ENCODE measurements at regions of chr2 and their contacts with region 1.

Region 1: DNA sequence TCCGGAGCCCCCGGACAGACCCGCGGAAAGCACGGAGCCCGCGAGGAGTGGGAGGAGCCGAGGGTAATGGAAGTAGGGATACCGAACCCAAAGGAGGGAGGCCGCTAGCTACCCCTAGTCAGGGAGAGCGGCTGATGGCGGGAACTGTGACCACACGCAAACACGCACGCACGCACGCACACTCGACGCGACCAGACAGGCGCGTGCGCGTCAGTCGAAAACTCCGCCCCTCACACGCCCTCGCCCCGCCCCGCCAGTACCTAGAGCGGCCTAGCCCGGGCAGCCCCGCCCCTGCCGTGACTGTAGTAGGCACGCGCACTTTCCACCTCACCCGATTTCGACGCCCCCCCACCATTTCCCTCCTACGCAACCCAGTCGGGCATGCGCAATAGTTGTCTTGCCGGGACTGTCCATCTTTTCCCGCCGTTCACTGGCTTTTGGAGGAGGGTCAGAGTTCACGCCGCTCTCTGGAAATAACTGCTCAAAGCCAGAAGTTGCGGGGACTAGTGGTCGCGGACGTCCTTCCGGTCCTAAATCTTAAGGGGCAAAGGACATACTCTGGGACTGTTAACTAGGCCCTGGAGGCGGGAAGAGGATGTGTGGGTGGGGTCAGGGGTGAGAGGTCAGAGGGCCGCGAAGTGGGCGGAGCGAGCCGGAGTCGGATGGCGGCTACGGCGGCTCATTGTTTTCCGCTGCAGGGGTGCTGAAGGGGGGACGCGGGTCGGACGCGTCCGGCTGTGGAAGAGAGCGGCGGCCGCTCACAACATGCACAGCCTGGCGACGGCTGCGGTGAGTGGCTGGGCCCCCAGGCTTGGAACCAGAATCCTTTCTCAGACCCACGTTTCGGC is at the starts of genes CNOT9 and USP37:
- DNase-seq: peak; percentile 100
- H3K4me3 Mint-ChIP-seq: peak within 1 kb of the TSS; percentile 93
- H3K27ac Mint-ChIP-seq: peak within 1 kb of the TSS; percentile 93
- H3K4me1 Mint-ChIP-seq: peaks cover 48% of the 10 kb centered on the region
- H3K27me3 Mint-ChIP-seq: no peaks in the 10 kb centered on the region
- total RNA-seq, gene CNOT9: 127 and 135 TPM in 2 replicates
- total RNA-seq, gene USP37: 40.7 and 43.7 TPM in 2 replicates

Region 2: DNA sequence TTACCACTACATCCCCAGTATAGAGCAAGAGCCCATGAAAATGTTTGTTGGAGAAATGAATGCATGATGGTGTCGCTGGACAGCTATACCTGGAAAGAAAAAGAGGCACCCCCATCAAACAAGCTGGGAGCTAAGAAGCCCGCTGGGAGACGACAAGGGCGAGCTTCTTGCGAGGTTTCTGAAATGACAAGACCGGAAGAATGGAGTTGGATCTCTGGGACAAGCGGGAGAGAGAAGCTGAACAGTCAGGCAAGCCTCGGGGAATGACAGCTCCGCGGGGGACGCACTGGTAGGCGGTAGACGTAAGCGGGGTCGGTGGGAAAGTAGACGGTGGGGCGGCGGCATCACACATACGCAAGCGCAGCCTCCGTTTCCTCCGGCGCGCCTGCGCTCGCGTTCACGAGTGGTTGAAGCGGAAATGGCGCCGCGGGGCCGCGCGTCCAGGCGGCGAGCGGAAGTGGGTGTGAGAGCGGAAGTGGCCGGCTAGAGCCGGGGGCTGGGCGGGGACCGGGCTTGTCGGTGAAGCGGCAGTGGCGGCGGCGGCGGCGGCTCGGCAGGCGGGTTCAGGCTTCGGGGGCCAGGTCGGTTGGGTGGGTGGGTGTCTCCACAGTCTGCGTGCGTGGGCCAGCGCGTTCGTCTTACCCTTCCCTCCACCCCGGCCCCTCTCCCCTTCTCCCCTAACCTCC is 351.6 kb before region 1 on chr2 and contains the start of gene ARPC2:
- intact Hi-C with region 1: loop called (anchors 1 kb)
- DNase-seq: peak; percentile 95
- H3K4me3 Mint-ChIP-seq: peak within 1 kb of the TSS; percentile 89
- H3K27ac Mint-ChIP-seq: peak within 1 kb of the TSS; percentile 95
- H3K4me1 Mint-ChIP-seq: peaks cover 35% of the 10 kb centered on the region
- H3K27me3 Mint-ChIP-seq: peaks cover 2% of the 10 kb centered on the region
- total RNA-seq, gene ARPC2: 639 and 643 TPM in 2 replicates

Region 3: DNA sequence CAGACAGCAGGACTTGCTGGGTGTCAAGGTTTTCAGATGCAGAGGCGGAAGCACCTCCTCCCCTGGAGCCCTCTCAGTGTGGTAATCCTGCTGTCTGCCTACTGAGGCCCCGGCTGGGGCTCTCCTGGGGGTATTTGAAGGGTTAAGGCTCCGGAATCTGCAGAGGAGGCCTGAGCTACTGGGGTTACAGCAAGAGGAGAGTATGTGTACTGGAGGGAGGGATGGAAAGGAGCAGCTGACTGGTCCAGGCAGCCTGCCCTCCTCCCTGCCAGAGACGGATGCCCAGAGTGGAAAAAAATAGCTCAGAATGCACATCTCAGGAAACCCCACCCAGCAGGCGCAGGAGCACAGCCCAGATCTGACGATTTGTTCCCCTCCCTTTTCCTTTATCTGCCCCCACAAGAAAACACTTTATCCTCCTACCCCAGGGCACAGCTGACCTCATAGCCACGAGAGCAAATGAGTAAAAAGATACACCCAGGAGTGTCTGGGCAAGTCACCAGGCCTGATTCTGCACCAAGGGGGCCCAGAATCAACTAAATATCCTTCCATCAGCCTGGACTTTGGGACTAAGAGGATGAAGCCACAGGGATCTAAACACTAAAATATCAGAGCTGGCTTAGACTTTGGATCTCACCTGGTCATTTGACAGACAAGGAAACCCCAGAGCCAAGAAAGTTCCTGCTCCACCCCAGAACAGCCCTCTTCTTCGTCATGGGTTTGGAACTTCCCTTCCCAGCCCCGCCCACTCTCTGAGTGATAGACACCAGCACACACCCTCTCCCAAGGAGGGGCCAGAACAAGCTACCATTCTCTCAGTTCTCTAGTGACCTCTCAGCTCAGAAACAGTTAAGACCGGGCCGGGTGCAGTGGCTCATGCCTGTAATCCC is 281.6 kb before region 1 on chr2:
- intact Hi-C with region 1: loop called (anchors 1 kb)
- DNase-seq: peak; percentile 82
- H3K4me3 Mint-ChIP-seq: peak overlapping the region; percentile 85
- H3K27ac Mint-ChIP-seq: peak overlapping the region; percentile 98
- H3K4me1 Mint-ChIP-seq: peaks cover 69% of the 10 kb centered on the region
- H3K27me3 Mint-ChIP-seq: no peaks in the 10 kb centered on the region

Region 4: GRCh38 chr2:218406209-218406948 is 162.0 kb before region 1 on chr2:
- intact Hi-C with region 1: loop called (anchors 1 kb)
- DNase-seq: peak; percentile 91
- H3K4me3 Mint-ChIP-seq: peak overlapping the region; percentile 76
- H3K27ac Mint-ChIP-seq: peak overlapping the region; percentile 81
- H3K4me1 Mint-ChIP-seq: peaks cover 36% of the 10 kb centered on the region
- H3K27me3 Mint-ChIP-seq: no peaks in the 10 kb centered on the region

Region 5: DNA sequence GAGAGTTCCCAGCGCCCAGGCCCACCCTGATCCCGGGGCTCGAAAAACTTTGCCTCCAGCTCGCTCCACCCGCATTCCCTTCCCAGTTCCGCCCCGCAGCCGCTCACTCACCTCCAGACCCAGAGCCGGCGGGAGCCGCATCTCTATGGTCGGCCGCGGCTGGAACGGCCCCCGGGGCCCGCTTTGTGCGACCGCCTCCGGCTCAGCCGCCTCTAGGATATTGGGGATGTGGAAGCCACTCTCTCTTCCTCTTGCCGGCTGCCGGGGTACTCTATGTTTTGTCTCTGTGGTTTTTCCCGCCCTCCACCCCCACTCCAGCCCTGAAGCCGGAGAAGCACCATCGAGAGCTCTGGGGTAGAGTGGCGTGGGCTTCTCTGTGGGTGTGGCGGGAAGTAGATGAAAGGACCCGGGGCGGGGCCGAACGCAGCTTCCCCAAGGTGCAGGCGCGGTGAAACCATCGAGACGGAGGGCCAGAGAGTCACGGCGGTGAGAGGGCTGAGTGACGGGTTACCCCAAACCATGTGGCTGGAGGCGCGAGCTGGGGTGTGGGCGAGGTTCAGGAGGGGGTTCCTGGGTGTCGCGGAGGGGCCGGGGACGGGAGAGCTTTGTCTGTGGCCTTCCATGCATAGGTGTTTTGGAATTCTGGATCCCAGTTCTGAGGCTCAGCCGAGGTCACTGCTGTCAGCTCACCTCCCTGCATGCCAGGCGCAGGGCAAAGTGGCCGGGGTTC is 91.0 kb after region 1 on chr2 and contains the starts of genes BCS1L and ZNF142:
- intact Hi-C with region 1: loop called (anchors 1 kb)
- DNase-seq: peak; percentile 92
- H3K4me3 Mint-ChIP-seq: peak within 1 kb of the TSS; percentile 91
- H3K27ac Mint-ChIP-seq: peak within 1 kb of the TSS; percentile 82
- H3K4me1 Mint-ChIP-seq: peaks cover 25% of the 10 kb centered on the region
- H3K27me3 Mint-ChIP-seq: no peaks in the 10 kb centered on the region
- total RNA-seq, gene BCS1L: 77.3 and 83.1 TPM in 2 replicates
- total RNA-seq, gene ZNF142: 48.7 and 51.0 TPM in 2 replicates

Region 6: DNA sequence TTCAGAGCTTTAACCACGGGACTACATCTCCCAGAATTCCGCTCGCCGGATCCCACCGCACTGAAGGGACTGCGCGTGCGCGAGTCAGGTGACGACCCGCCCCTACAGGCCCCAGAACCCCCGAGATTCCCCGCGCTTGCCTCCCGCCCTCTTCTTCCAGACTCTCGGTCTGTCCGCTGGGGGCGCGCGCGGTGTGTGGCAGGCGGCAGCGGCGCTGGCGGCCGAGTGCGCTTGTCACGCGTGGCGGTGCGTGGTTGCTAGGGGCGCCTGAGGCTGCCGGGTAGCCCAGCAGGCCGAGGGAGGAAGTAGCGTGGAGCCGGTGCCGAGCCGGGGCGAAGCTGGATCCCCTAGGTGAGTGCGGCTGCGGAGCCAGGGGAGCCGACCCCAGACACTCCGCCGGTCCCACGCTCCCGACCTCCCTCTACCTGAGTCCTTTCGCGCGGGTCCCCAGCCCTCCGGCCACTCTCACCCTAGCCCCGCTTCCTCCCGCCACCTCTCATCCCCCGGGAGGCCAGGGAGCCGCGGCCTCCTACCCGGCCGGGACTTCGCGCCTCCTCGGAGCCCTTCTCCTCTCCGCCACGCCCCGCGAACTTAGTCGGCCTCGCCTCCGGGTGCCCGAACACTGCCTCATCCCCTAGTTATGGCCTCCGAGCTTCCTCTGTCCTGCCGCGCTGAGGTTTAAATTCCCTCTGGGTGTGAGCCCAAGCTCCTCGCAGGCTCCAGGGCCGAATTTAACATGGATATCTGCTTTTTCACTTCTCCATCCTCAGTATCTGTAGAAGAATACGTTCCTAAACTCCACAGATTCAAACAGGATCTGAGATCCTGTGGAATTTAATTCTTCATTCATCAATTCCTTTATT is 142.5 kb after region 1 on chr2 and contains the start of gene TTLL4:
- intact Hi-C with region 1: loop called (anchors 2 kb)
- DNase-seq: peak; percentile 98
- H3K4me3 Mint-ChIP-seq: peak within 1 kb of the TSS; percentile 95
- H3K27ac Mint-ChIP-seq: peak within 1 kb of the TSS; percentile 84
- H3K4me1 Mint-ChIP-seq: peaks cover 17% of the 10 kb centered on the region
- H3K27me3 Mint-ChIP-seq: peaks cover 1% of the 10 kb centered on the region
- total RNA-seq, gene TTLL4: 55.7 and 64.7 TPM in 2 replicates

Region 7: DNA sequence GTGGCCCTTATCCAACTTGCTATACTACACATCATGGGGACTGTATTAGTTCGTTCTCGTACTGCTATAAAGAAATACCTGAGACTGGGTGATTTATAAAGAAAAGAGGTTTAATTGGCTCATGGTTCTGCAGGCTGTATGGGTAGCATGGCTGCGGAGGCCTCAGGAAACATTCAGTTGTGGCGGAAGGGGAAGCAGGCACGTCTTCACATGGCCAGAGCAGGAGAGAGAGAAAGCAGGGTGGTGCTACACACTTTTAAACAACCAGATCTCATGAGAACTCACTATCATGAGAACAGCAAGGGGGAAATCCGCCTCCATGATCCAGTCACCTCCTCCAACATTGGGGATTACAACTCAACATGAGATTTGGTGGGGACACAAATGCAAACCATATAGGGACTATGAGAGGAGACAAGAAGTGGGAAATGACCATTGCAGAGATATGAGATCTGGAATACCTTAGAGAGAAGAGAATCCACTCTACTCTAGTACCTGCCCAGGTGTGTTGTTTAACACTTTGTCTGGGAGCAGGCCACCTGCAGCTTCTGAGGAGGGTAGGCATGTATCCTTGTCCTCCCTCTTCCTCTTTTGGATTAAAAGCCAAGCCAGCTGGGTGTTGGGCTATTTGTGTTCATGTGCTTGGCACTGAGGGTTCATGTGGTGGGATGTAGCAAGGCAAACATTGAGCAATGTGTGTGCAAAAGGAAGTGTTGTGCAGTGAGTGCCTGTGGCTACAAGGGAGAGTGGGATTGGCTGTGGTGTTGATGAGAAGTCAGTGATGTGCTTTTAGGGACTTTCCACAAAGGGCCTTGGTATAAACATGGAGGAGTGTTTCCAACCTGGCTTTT is 165.0 kb after region 1 on chr2:
- intact Hi-C with region 1: no loop called
- DNase-seq: peak; percentile 16
- H3K4me3 Mint-ChIP-seq: no peak overlapping the region
- H3K27ac Mint-ChIP-seq: peak overlapping the region; percentile 48
- H3K4me1 Mint-ChIP-seq: peaks cover 28% of the 10 kb centered on the region
- H3K27me3 Mint-ChIP-seq: no peaks in the 10 kb centered on the region

Region 8: GRCh38 chr2:219160186-219161017 is 592.0 kb after region 1 on chr2 and contains the start of gene NHEJ1:
- intact Hi-C with region 1: loop called (anchors 2 kb)
- DNase-seq: peak; percentile 90
- H3K4me3 Mint-ChIP-seq: peak within 1 kb of the TSS; percentile 87
- H3K27ac Mint-ChIP-seq: peak within 1 kb of the TSS; percentile 93
- H3K4me1 Mint-ChIP-seq: peaks cover 17% of the 10 kb centered on the region
- H3K27me3 Mint-ChIP-seq: no peaks in the 10 kb centered on the region
- total RNA-seq, gene NHEJ1: 15.9 and 22.9 TPM in 2 replicates

Measured in activated T-helper 2 cell treated with anti-CD3 and anti-CD28 coated beads, Interferon-gamma antibody, Interleukin-2, Interleukin-4, amounts not matched to agents 10 μg/mL and 5 μg/mL and 100 μg/mL, durations not matched to agents 14 hours and 24 hours and 36 hours (primary cell).